ENCODE measurements at regions of chr11 and their contacts with region 1.

Region 1: GRCh38 chr11:59822989-59823566 is 12.5 kb upstream of the MRPL16 start:
- DNase-seq: peak in 3 of 9 donors; percentile 12 to 32 (median 17)
- ATAC-seq: peak; percentile 86
- H3K4me3 ChIP-seq: no peak overlapping the region
- H3K4me3 Mint-ChIP-seq: peak overlapping the region in 1 of 10 donors; percentile 20
- H3K27ac ChIP-seq: no peak overlapping the region
- H3K27ac Mint-ChIP-seq: no peak overlapping the region
- H3K4me1 ChIP-seq: peaks cover 0 to 4% of the 10 kb centered on the region in 2 donors
- H3K4me1 Mint-ChIP-seq: peaks cover 4 to 15% (median 12%) of the 10 kb centered on the region in 7 donors
- H3K27me3 ChIP-seq: no peaks in the 10 kb centered on the region
- H3K27me3 Mint-ChIP-seq: peaks cover 0 to 10% (median 0%) of the 10 kb centered on the region in 5 donors

Region 2: DNA sequence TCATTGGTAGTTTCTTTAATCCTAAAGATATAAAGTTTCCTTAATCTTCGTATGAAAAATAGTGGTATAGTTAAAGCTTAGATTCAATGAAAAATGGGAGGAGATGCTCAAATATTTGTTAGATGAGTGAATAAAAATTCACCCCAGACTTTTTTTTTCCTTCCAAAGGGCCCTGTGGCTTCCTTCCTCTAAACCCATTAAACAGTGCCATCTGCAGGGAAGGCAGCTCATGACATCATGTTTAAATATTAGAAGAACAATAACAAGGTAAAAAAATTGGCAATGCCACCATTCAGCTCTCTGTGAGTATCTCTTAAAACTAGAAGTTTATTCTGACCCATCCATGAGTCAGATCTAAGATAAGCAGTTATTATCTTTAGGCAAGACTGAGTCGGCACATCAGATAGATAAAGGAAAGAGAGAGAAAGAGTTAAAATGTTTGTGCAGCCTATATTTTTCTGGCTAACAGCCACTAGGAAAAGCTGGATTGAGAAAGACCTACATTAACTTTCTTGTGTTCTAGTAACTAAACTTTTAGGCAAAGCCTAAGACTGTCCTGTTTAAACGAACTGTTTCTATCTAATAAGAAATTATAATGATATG is 96.0 kb after region 1 on chr11:
- CTCF ChIA-PET with region 1: no interaction called
- POLR2A ChIA-PET with region 1: no interaction called
- intact Hi-C with region 1: loop called in 1 of 2 experiments (anchors 1 kb)
- DNase-seq: no peak
- ATAC-seq: no peak
- H3K4me3 ChIP-seq: no peak overlapping the region
- H3K4me3 Mint-ChIP-seq: no peak overlapping the region
- H3K27ac ChIP-seq: no peak overlapping the region
- H3K27ac Mint-ChIP-seq: no peak overlapping the region
- H3K4me1 ChIP-seq: no peaks in the 10 kb centered on the region
- H3K4me1 Mint-ChIP-seq: peaks cover 0 to 2% (median 0%) of the 10 kb centered on the region in 7 donors
- H3K27me3 ChIP-seq: no peaks in the 10 kb centered on the region
- H3K27me3 Mint-ChIP-seq: peaks cover 0 to 15% (median 5%) of the 10 kb centered on the region in 5 donors

Region 3: DNA sequence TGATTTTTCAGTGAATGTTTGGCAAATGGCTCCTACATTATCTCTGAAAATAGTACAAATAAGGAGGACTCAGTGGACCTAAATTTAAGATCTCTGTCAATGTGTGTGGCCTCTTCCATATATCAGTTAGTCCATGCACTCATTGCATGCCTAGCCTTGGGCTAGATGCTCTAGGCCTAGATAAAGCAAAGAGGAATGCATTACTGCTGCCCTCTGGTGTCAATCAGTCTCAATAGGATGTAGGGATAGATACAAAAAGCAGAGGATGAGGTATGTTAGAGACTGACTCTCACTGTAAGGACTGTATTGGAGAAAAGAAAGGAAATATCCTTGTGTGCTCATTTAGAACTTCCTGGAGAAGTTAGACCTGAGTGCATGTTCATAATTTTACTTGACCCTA is 307.4 kb after region 1 on chr11:
- CTCF ChIA-PET with region 1: no interaction called
- POLR2A ChIA-PET with region 1: no interaction called
- intact Hi-C with region 1: loop called in 1 of 2 experiments (anchors 1 kb)
- DNase-seq: peak in 1 of 9 donors; percentile 8
- ATAC-seq: no peak
- H3K4me3 ChIP-seq: no peak overlapping the region
- H3K4me3 Mint-ChIP-seq: no peak overlapping the region
- H3K27ac ChIP-seq: no peak overlapping the region
- H3K27ac Mint-ChIP-seq: no peak overlapping the region
- H3K4me1 ChIP-seq: no peaks in the 10 kb centered on the region
- H3K4me1 Mint-ChIP-seq: peaks cover 0 to 3% (median 0%) of the 10 kb centered on the region in 7 donors
- H3K27me3 ChIP-seq: no peaks in the 10 kb centered on the region
- H3K27me3 Mint-ChIP-seq: peaks cover 0 to 13% (median 8%) of the 10 kb centered on the region in 5 donors

Region 4: GRCh38 chr11:60193687-60194433 is 370.8 kb after region 1 on chr11:
- CTCF ChIA-PET with region 1: no interaction called
- POLR2A ChIA-PET with region 1: no interaction called
- intact Hi-C with region 1: loop called in 1 of 2 experiments (anchors 1 kb)
- DNase-seq: peak in 8 of 9 donors; percentile 1 to 58 (median 34)
- ATAC-seq: peak; percentile 77
- H3K4me3 ChIP-seq: no peak overlapping the region
- H3K4me3 Mint-ChIP-seq: no peak overlapping the region
- H3K27ac ChIP-seq: no peak overlapping the region
- H3K27ac Mint-ChIP-seq: no peak overlapping the region
- H3K4me1 ChIP-seq: no peaks in the 10 kb centered on the region
- H3K4me1 Mint-ChIP-seq: peaks cover 0 to 4% (median 0%) of the 10 kb centered on the region in 7 donors
- H3K27me3 ChIP-seq: no peaks in the 10 kb centered on the region
- H3K27me3 Mint-ChIP-seq: peaks cover 2 to 21% (median 17%) of the 10 kb centered on the region in 5 donors

Measured in naive thymus-derived CD4-positive, alpha-beta T cell (primary cell).